ENCODE measurements at regions of chr11 and their contacts with region 1.

Region 1: GRCh38 chr11:86740709-86741483 is 59.4 kb upstream of the PRSS23 start:
- DNase-seq: peak; percentile 88
- H3K4me3 ChIP-seq: no peak overlapping the region
- H3K27ac ChIP-seq: peak overlapping the region; percentile 83 to 96 (median 92)
- H3K4me1 ChIP-seq: peaks cover 0 to 76% (median 60%) of the 10 kb centered on the region in 4 donors
- H3K27me3 ChIP-seq: no peaks in the 10 kb centered on the region
- CTCF ChIP-seq: no peak
- EP300 ChIP-seq: no peak
- POLR2A ChIP-seq: no peak

Region 2: DNA sequence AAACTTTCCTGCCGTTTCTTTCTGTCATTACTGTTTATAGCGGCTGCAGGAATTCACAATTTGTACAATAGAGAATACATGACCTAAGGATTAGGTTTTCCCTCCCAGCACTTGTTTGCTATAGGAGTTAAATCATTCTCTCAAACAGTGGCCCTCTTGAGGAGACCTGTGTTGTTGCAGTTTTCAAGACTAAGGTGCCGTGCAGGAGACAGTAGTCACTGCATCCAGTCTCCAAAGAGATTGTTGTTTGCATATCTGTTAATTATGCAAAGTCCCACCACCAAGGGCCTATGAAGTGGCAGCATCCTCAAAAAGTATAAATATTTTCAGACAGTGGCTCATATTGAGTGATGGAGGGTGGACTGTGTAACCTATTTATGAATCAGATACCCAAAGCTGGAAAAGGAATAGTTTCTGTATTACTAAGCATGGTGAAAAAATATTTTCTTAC is 61.7 kb after region 1 on chr11:
- intact Hi-C with region 1: loop called (anchors 5 kb)
- DNase-seq: no peak
- H3K4me3 ChIP-seq: peak overlapping the region; percentile 69 to 91 (median 81)
- H3K27ac ChIP-seq: peak overlapping the region in 3 of 4 donors; percentile 88 to 94 (median 92)
- H3K4me1 ChIP-seq: peaks cover 0 to 71% (median 62%) of the 10 kb centered on the region in 4 donors
- H3K27me3 ChIP-seq: no peaks in the 10 kb centered on the region
- CTCF ChIP-seq: peak; percentile 17 to 76 (median 56)
- EP300 ChIP-seq: no peak
- POLR2A ChIP-seq: no peak